Activated CD4-positive, alpha-beta memory T cell treated with anti-CD3 and anti-CD28 coated beads for 36 hours (primary cell): ENCODE measurements at regions of chr3 and their contacts with region 1.

Region 1: DNA sequence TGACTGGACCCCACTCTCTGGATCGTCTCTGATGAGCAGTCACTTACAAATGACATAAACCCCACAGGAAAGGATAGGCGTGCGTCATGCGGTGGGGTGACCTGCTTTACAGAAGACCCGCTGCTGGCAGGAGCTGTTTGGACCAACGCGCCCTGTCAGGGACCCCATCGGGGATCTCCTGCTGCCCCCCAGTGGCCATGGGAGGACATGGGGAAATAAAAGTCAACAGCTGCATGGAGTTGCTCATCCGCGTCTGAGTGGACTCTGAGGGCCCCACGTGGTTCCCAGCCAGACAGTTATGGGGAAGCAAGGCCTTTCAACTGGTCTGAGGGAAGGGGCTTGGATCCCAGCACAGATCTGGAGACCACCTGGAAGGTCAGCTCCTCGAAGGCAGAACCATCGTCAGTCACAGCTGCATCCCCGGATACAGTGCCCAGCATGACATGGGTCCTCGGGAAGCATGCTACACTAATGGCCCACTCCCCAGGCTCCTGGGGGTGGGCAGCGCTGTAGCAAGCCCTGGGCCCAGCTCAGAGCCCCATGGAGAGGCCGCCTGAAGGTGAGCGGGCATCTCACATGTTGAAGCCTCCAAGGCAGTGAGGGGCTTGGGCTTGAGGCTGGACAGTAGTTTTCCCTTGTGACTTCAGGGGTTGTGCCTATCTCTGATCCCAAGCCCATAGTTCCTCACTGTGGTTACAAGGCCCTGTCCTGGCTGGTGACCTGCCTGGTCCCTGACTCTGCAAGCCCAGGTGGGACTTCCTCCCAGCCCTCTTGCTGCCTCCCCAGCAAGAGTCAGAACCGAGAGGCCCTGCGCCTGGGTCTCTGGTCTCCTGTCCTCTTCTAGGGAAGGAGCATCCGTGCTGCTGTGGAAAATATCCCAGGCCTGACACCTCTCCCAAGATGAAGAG is 32.3 kb downstream of the PTH1R start:
- DNase-seq: peak; percentile 90
- H3K4me3 Mint-ChIP-seq: no peak overlapping the region
- H3K27ac Mint-ChIP-seq: no peak overlapping the region
- H3K4me1 Mint-ChIP-seq: peaks cover 21% of the 10 kb centered on the region
- H3K27me3 Mint-ChIP-seq: no peaks in the 10 kb centered on the region

Region 2: GRCh38 chr3:46705022-46705530 is 204.7 kb before region 1 on chr3:
- CTCF ChIA-PET with region 1: interaction called, 16 read pairs
- POLR2A ChIA-PET with region 1: no interaction called
- intact Hi-C with region 1: no loop called
- DNase-seq: peak; percentile 77
- H3K4me3 Mint-ChIP-seq: no peak overlapping the region
- H3K27ac Mint-ChIP-seq: no peak overlapping the region
- H3K4me1 Mint-ChIP-seq: peaks cover 10% of the 10 kb centered on the region
- H3K27me3 Mint-ChIP-seq: peaks cover 2% of the 10 kb centered on the region

Region 3: DNA sequence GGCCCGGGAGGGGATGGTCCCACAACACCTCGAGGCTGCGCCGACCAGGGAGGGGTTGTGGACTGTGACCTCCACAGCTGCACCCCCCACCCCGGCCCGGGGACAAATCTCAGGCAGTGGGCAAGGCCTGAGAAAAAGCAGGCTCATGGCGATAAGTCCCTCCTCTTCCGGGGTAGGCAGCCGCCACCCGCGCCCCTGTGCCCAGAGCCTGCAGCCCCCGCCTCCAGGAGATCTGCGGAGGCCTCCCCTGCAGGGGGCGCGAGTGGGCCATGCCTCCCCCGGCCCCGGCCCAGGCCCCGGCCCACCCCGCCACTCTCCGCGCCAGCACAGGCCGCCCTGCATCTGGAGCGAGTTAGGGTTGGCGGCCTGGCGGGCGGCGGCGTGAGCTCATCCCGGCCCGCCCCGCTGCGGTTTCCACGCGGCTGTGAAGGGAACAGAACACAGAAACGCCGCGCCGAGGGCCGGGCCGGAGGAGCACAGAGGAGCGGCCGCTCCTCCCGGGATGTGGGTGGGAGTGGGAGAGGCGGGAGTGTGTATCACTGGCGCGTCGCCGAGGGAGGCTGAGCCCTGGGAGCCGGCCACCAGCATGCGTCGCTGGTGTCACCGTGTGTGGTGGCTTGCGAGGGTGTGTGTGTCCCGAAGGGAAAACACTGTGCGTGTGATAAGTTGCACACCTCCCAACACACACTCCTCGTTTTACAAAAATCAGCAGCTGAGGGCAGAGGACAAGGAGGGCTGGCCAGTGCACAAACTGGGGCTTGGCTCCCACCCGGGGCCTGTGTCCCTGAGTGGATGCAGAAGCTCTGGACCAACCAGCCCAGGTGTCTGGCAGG is 63.8 kb before region 1 on chr3:
- CTCF ChIA-PET with region 1: interaction called, 5 read pairs
- POLR2A ChIA-PET with region 1: no interaction called
- intact Hi-C with region 1: loop called (anchors 5 kb)
- DNase-seq: peak; percentile 81
- H3K4me3 Mint-ChIP-seq: peak overlapping the region; percentile 65
- H3K27ac Mint-ChIP-seq: no peak overlapping the region
- H3K4me1 Mint-ChIP-seq: peaks cover 5% of the 10 kb centered on the region
- H3K27me3 Mint-ChIP-seq: peaks cover 1% of the 10 kb centered on the region

Region 4: GRCh38 chr3:46895204-46895660 is 14.6 kb before region 1 on chr3:
- CTCF ChIA-PET with region 1: interaction called, 15 read pairs
- POLR2A ChIA-PET with region 1: no interaction called
- intact Hi-C with region 1: no loop called
- DNase-seq: peak; percentile 83
- H3K4me3 Mint-ChIP-seq: no peak overlapping the region
- H3K27ac Mint-ChIP-seq: no peak overlapping the region
- H3K4me1 Mint-ChIP-seq: peaks cover 7% of the 10 kb centered on the region
- H3K27me3 Mint-ChIP-seq: peaks cover 49% of the 10 kb centered on the region

Region 5: GRCh38 chr3:46998121-46998851 is 88.5 kb after region 1 on chr3:
- CTCF ChIA-PET with region 1: interaction called, 14 read pairs
- POLR2A ChIA-PET with region 1: no interaction called
- intact Hi-C with region 1: no loop called
- DNase-seq: peak; percentile 82
- H3K4me3 Mint-ChIP-seq: no peak overlapping the region
- H3K27ac Mint-ChIP-seq: peak overlapping the region; percentile 66
- H3K4me1 Mint-ChIP-seq: peaks cover 17% of the 10 kb centered on the region
- H3K27me3 Mint-ChIP-seq: no peaks in the 10 kb centered on the region

Region 6: GRCh38 chr3:47553407-47553806 is 643.6 kb after region 1 on chr3:
- CTCF ChIA-PET with region 1: no interaction called
- POLR2A ChIA-PET with region 1: no interaction called
- intact Hi-C with region 1: no loop called
- DNase-seq: no peak
- H3K4me3 Mint-ChIP-seq: no peak overlapping the region
- H3K27ac Mint-ChIP-seq: no peak overlapping the region
- H3K4me1 Mint-ChIP-seq: no peaks in the 10 kb centered on the region
- H3K27me3 Mint-ChIP-seq: peaks cover 2% of the 10 kb centered on the region

Region 7: DNA sequence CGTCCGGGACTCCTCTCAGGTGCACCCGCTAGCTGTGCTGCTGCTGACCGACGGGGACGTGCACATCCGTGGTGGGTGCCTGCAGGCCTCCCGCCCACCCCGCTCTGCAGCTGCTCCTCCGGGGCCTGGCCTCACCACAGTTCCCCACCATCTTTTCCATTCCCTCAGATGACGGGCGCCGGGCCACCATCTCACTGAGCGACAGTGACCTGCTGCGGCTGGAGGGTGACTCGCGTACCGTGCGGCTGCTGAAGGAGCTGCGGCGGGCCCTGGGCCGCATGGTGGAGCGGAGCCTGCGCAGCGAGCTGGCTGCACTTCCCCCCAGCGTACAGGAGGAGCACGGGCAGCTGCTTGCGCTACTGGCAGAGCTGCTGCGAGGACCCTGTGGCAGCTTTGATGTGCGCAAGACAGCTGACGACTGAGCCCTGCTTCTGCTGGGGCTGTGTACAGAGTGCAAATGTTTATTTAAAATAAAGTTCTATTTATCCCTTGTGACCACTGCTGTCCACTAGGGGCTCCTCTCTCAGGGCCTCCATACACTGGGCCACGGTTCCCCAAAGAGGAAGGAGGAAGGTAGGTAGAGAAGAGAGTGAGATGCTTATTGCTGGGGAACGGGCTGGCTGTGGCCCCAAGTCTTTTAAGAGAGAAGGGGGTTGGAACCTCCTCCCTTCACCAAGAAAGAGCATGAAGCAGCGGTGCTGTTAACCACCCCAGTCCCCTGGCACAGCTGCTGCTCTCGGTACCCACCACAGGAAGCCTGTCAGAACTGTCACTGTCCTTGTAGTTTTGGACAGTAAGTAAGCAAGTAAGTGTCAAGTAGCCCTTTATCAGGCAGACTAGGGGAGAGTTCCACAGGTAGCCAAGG is 940.1 kb after region 1 on chr3:
- CTCF ChIA-PET with region 1: no interaction called
- POLR2A ChIA-PET with region 1: no interaction called
- intact Hi-C with region 1: no loop called
- DNase-seq: no peak
- H3K4me3 Mint-ChIP-seq: no peak overlapping the region
- H3K27ac Mint-ChIP-seq: no peak overlapping the region
- H3K4me1 Mint-ChIP-seq: no peaks in the 10 kb centered on the region
- H3K27me3 Mint-ChIP-seq: no peaks in the 10 kb centered on the region